GM10248 (cell line): ENCODE measurements at regions of chr3 and their contacts with region 1.

Region 1: GRCh38 chr3:15527031-15527459 is 5.5 kb upstream of the COLQ start:
- DNase-seq: no peak
- CTCF ChIP-seq: peak; percentile 9

Region 2: GRCh38 chr3:15440891-15441290 is 86.2 kb before region 1 on chr3:
- CTCF ChIA-PET with region 1: no interaction called
- POLR2A ChIA-PET with region 1: no interaction called
- DNase-seq: no peak
- CTCF ChIP-seq: no peak

Region 3: DNA sequence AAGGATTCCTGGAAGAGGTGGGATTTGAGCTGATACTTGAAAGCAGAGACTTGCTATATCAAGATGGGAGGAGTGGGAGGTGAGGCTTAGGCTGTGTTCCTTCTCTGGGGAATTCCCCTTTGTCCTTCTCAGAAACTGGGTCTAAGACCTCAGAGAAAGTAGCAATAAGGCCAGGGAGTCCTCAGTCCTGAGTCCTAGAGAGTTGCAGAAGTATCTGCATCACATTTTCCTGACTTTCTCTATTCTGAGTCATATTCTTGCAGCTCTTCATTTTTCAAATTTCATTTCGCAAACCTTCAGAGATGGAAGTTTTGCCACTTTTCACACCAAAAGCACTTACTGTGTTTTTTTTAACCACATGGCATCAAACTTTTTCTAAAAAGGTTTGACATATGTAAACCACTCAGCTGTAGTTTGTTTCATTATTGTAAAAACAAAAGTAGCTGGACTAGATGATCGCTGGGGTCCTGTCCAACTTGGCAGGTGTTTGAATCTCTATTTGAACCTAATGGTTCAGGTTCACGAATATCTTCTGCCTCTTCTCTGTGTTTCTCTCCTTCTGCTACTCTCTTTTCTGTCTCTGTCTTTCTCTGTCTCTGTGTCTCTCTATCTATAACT is 26.8 kb before region 1 on chr3:
- CTCF ChIA-PET with region 1: no interaction called
- POLR2A ChIA-PET with region 1: no interaction called
- DNase-seq: peak; percentile 40
- CTCF ChIP-seq: no peak

Region 4: DNA sequence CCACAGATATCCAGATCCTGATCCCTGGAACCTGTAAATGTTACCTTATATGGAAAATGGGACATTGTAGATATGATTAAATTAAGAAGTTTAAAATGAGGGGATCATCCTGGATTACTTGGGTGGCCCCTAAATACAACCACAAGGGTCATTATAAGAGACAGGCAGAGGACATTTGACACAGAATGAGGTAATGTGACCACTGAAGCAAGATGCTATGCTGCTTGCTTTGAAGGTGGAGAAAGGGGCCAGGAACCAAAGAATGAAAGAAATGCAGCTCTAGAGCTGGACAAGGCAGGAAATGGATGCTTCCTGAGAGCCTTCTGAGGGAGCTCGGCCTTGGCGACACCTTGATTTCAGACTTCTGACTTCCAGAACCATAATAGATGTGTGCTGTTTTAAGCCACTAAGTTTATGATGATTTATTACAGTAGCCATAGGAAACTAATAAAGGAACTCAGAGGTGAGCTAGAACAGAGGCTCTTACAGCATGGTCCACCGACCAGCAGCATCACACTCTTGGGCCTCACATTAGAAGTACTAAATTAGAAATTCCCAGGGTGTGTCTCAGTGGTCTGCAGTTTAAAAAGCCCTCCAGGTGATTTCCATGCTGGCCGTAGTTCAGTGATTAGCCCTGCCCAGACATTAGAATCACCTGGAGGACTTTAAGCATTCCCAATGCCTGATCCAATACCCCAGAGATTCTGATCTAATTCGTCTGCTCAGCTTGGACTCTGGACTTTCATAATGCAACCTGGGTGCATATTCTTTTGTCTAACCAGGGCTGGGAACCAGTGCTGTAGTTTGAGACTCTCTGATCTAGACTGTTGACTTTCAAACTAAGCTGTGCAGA is 13.0 kb before region 1 on chr3:
- CTCF ChIA-PET with region 1: interaction called, 23 read pairs
- POLR2A ChIA-PET with region 1: no interaction called
- DNase-seq: no peak
- CTCF ChIP-seq: no peak

Region 5: DNA sequence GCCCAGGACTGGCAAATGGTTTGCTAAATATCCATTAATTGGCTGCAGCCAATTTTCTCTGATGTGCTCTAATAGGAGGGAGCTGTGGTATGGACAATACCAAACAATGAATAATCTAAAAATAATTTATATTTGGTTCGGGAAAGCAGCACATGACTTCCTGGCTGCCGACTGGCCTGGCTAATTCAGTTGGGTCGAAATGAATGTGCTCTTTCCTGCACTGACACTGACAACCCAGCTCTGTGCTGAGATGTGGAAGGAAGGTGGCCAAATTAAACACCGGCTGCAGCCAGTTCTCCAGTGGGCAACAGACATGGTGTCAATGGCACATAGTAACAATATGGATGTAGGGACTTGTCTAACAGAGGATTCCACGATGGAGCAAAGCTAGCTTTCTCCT is 15.6 kb after region 1 on chr3:
- CTCF ChIA-PET with region 1: interaction called, 16 read pairs
- POLR2A ChIA-PET with region 1: no interaction called
- DNase-seq: no peak
- CTCF ChIP-seq: no peak